Body of pancreas (tissue), 4 donors: ENCODE measurements at regions of chr9 and their contacts with region 1.

Region 1: GRCh38 chr9:94805585-94805984 is 79.1 kb downstream of the AOPEP start:
- DNase-seq: no peak
- ATAC-seq: peak; percentile 72
- H3K4me3 ChIP-seq: no peak overlapping the region
- H3K27ac ChIP-seq: peak overlapping the region in 2 of 4 donors; percentile 49 to 63
- H3K4me1 ChIP-seq: peaks cover 27% of the 10 kb centered on the region
- H3K27me3 ChIP-seq: no peaks in the 10 kb centered on the region
- CTCF ChIP-seq: no peak
- POLR2A ChIP-seq: no peak

Region 2: GRCh38 chr9:94853887-94854286 is 48.3 kb after region 1 on chr9:
- intact Hi-C with region 1: loop called (anchors 10 kb)
- DNase-seq: no peak
- ATAC-seq: peak; percentile 84
- H3K4me3 ChIP-seq: no peak overlapping the region
- H3K27ac ChIP-seq: peak overlapping the region; percentile 41 to 63 (median 48)
- H3K4me1 ChIP-seq: peaks cover 12% of the 10 kb centered on the region
- H3K27me3 ChIP-seq: no peaks in the 10 kb centered on the region
- CTCF ChIP-seq: no peak
- POLR2A ChIP-seq: no peak

Region 3: GRCh38 chr9:95031711-95032461 is 226.3 kb after region 1 on chr9:
- intact Hi-C with region 1: no loop called
- DNase-seq: peak; percentile 90 to 96 (median 95)
- ATAC-seq: peak; percentile 85
- H3K4me3 ChIP-seq: no peak overlapping the region
- H3K27ac ChIP-seq: peak overlapping the region; percentile 89 to 96 (median 92)
- H3K4me1 ChIP-seq: peaks cover 89% of the 10 kb centered on the region
- H3K27me3 ChIP-seq: no peaks in the 10 kb centered on the region
- CTCF ChIP-seq: no peak
- POLR2A ChIP-seq: peak in 2 of 3 donors; percentile 67 to 75